ENCODE measurements at regions of chr17 and their contacts with region 1.

Region 1: GRCh38 chr17:76671123-76671911 is 27.8 kb upstream of the ST6GALNAC1 start:
- DNase-seq: peak; percentile 91
- ATAC-seq: peak; percentile 99
- H3K4me3 Mint-ChIP-seq: peak overlapping the region; percentile 91
- H3K27ac Mint-ChIP-seq: peak overlapping the region; percentile 90
- H3K4me1 Mint-ChIP-seq: peaks cover 22% of the 10 kb centered on the region
- H3K27me3 Mint-ChIP-seq: peaks cover 10% of the 10 kb centered on the region
- CTCF ChIP-seq: no peak

Region 2: DNA sequence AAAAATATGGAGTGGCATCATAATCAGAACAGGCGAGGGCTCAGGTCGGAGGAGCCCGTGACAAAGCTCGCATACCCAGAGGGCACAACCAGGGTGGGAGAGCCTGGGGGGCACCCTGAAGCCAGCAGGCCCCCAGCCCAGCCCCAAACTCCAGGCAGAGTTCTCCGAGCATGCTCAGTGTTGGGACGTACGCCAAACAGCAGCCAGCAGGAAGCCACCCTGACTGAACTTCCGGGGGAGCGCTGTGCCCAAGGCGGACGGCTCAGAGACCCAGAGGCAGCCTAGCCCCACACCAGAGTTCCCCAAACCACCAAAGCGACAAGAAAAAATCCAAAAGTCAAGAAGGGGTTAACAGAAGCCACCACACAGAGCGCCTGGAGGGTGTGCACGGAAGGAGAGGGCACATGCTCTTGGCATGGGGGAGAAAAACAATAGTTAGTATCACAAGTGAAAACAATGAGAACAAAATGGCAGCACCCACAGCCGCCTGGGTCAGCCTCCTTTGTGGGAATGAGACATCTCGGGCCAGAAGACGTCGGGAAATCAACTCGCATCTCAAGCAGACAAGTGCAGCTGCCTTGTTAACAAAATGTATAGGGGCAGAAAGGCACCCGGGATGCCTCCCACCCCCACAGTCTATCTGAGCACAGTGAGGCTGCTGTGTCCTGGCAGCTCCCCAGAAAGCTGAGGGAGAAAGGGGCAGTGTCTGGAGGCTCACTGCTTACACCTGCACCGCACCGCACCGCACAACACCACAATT is 579.6 kb before region 1 on chr17:
- CTCF ChIA-PET with region 1: no interaction called
- POLR2A ChIA-PET with region 1: interaction called, 10 read pairs
- intact Hi-C with region 1: no loop called
- DNase-seq: no peak
- ATAC-seq: no peak
- H3K4me3 Mint-ChIP-seq: no peak overlapping the region
- H3K27ac Mint-ChIP-seq: no peak overlapping the region
- H3K4me1 Mint-ChIP-seq: no peaks in the 10 kb centered on the region
- H3K27me3 Mint-ChIP-seq: no peaks in the 10 kb centered on the region
- CTCF ChIP-seq: no peak

Region 3: GRCh38 chr17:76353599-76354316 is 317.6 kb before region 1 on chr17 and contains the start of gene PRPSAP1:
- CTCF ChIA-PET with region 1: no interaction called
- POLR2A ChIA-PET with region 1: no interaction called
- intact Hi-C with region 1: loop called (anchors 1 kb)
- DNase-seq: peak; percentile 83
- ATAC-seq: peak; percentile 93
- H3K4me3 Mint-ChIP-seq: peak within 1 kb of the TSS; percentile 94
- H3K27ac Mint-ChIP-seq: peak within 1 kb of the TSS; percentile 98
- H3K4me1 Mint-ChIP-seq: peaks cover 23% of the 10 kb centered on the region
- H3K27me3 Mint-ChIP-seq: no peaks in the 10 kb centered on the region
- CTCF ChIP-seq: no peak
- total RNA-seq, gene PRPSAP1: 26.7 and 27.1 TPM in 2 replicates

Region 4: DNA sequence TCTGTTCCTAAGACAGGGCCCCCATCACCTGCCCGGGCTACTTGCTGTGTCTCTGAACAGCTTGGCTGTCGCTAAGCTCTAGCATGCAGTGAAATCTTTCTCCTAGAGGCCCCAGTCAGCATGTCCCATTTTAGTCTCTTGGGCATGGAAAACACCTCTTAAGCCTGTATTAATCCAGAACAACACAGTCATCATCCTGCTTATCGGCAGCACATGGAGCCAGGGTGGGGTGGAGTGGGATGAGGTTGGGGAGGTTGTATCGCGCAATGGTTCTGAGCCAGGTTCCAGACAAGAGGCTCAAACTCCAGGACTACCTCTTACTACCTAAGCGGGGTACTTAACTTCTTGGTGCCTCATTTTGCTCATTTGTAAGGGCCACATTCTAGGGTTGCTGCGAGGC is 93.4 kb before region 1 on chr17:
- CTCF ChIA-PET with region 1: no interaction called
- POLR2A ChIA-PET with region 1: interaction called, 12 read pairs
- intact Hi-C with region 1: no loop called
- DNase-seq: no peak
- ATAC-seq: no peak
- H3K4me3 Mint-ChIP-seq: no peak overlapping the region
- H3K27ac Mint-ChIP-seq: no peak overlapping the region
- H3K4me1 Mint-ChIP-seq: peaks cover 4% of the 10 kb centered on the region
- H3K27me3 Mint-ChIP-seq: peaks cover 5% of the 10 kb centered on the region
- CTCF ChIP-seq: no peak

Region 5: DNA sequence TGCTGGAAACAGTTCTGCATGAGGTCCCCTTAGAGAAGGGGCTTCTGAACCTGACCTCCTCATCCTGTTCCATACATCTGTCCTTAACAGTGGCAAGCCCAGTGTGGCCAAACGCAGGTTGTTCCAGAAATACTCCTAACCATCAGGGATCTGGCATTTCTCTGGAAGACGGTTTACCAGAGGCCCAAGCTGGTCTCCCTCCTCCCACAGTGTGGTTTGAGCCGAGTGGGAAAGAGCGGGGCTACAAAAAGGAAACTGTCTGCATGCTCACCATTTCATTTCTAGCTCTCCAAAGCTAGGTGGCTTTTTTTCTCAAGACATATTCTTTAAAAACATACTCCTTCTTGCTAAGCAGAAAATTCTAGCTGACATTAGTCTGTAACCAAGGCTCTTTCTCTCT is 33.5 kb after region 1 on chr17:
- CTCF ChIA-PET with region 1: no interaction called
- POLR2A ChIA-PET with region 1: no interaction called
- intact Hi-C with region 1: no loop called
- DNase-seq: no peak
- ATAC-seq: no peak
- H3K4me3 Mint-ChIP-seq: no peak overlapping the region
- H3K27ac Mint-ChIP-seq: no peak overlapping the region
- H3K4me1 Mint-ChIP-seq: peaks cover 2% of the 10 kb centered on the region
- H3K27me3 Mint-ChIP-seq: no peaks in the 10 kb centered on the region
- CTCF ChIP-seq: no peak

Region 6: DNA sequence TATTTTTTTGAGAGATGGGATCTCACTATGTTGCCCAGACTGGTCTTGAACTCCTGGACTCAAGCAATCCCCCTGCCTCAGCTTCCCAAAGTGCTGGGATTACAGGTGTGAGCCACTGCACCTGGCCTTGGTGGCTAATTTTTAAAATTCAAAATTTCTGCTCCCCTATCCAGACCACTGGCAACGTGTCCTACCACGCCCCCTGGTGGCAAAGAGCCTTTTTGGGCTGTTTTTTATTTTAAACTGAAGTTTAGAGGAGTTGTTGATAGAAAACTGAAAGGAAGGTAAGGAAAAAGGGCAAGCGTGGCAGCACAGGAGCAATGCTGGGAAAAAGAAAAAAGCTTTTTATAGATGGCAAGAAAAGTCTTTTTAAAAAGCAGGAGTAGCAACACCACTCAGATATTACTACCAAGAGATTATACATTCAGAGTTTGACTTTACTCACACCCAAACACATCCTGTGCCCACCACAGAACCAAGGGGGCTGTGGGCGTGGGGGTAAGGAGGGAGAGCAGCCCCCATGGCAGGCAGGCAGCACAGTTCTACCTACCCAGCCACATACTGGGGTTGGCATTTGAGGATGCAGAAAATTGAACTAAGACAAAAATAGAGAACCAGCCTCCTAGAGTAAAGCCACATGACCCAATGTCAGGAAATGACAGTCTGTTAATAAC is 43.6 kb after region 1 on chr17:
- CTCF ChIA-PET with region 1: no interaction called
- POLR2A ChIA-PET with region 1: no interaction called
- intact Hi-C with region 1: loop called (anchors 2 kb)
- DNase-seq: peak; percentile 56
- ATAC-seq: peak; percentile 29
- H3K4me3 Mint-ChIP-seq: peak overlapping the region; percentile 39
- H3K27ac Mint-ChIP-seq: peak overlapping the region; percentile 78
- H3K4me1 Mint-ChIP-seq: peaks cover 27% of the 10 kb centered on the region
- H3K27me3 Mint-ChIP-seq: no peaks in the 10 kb centered on the region
- CTCF ChIP-seq: peak; percentile 76

Region 7: DNA sequence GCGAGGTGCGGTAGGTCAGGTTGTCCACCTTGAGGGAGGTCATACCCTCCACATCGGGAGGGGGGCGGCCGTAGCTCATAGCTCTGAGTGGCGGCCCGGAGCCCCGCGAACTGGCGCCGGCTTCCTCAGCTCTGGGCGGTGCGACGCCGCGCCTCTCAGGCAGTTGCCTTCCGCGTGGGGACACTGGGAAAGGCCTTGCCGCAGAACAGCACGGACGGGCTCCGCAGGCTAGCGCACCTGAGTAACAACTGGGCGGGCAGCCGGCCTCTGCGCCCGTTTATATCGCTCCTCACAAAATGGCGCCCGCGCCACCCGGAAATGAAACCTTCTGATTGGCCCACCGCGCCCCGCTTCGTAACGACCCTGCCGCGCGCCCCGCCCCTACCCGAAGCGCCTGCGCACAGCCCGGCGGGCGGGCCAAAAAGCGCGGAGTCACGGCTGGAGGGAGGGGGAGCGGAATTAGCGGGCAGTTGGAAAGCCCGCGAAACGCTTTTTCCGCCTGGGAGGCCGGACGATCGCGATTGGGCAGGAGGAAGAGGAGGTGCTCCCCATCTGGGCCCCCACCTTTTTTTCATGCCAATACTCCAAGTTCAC is 65.9 kb after region 1 on chr17 and contains the start of gene SRSF2:
- CTCF ChIA-PET with region 1: no interaction called
- POLR2A ChIA-PET with region 1: interaction called, 21 read pairs
- intact Hi-C with region 1: loop called (anchors 1 kb)
- DNase-seq: peak; percentile 99
- ATAC-seq: peak; percentile 74
- H3K4me3 Mint-ChIP-seq: peak within 1 kb of the TSS; percentile 97
- H3K27ac Mint-ChIP-seq: peak within 1 kb of the TSS; percentile 96
- H3K4me1 Mint-ChIP-seq: peaks cover 50% of the 10 kb centered on the region
- H3K27me3 Mint-ChIP-seq: no peaks in the 10 kb centered on the region
- CTCF ChIP-seq: no peak
- total RNA-seq, gene SRSF2: 335 and 367 TPM in 2 replicates

Measured in activated B cell treated with CpG ODN at 0.5 μM for 24 hours (primary cell).